ENCODE measurements at regions of chr20 and their contacts with region 1.

Region 1: GRCh38 chr20:33992923-33993575 is 662 bp upstream of the RALY start:
- DNase-seq: peak; percentile 97 to 99
- H3K4me3 ChIP-seq: peak overlapping the region; percentile 91 to 92 (median 92)
- H3K27ac ChIP-seq: peak overlapping the region; percentile 99
- H3K4me1 ChIP-seq: peaks cover 1 to 11% (median 5%) of the 10 kb centered on the region in 4 experiments; a peak in 5 of 7 replicates
- H3K27me3 ChIP-seq: no peaks in the 10 kb centered on the region
- CTCF ChIP-seq: no peak
- EP300 ChIP-seq: no peak
- POLR2A ChIP-seq: peak; percentile 75 to 97
- RAD21 ChIP-seq: no peak

Region 2: GRCh38 chr20:33969563-33969962 is 23.5 kb before region 1 on chr20:
- CTCF ChIA-PET with region 1: no interaction called
- POLR2A ChIA-PET with region 1: interaction called, 12 read pairs
- DNase-seq: no peak
- H3K4me3 ChIP-seq: no peak overlapping the region
- H3K27ac ChIP-seq: no peak overlapping the region
- H3K4me1 ChIP-seq: no peaks in the 10 kb centered on the region
- H3K27me3 ChIP-seq: no peaks in the 10 kb centered on the region
- CTCF ChIP-seq: no peak
- EP300 ChIP-seq: no peak
- POLR2A ChIP-seq: no peak
- RAD21 ChIP-seq: no peak

Region 3: GRCh38 chr20:34010405-34010931 is 17.4 kb after region 1 on chr20:
- CTCF ChIA-PET with region 1: interaction called, 6 read pairs
- POLR2A ChIA-PET with region 1: interaction called, 43 read pairs
- DNase-seq: peak in 1 of 2 experiments; percentile 43
- H3K4me3 ChIP-seq: peak overlapping the region in 2 of 4 experiments; percentile 1 to 42; a peak in 3 of 8 replicates
- H3K27ac ChIP-seq: no peak overlapping the region
- H3K4me1 ChIP-seq: peaks cover 0 to 33% (median 19%) of the 10 kb centered on the region in 4 experiments
- H3K27me3 ChIP-seq: no peaks in the 10 kb centered on the region
- CTCF ChIP-seq: no peak
- EP300 ChIP-seq: no peak; a peak in 1 of 3 replicates
- POLR2A ChIP-seq: no peak
- RAD21 ChIP-seq: no peak